IMR-90 (cell line): ENCODE measurements at regions of chr7 and their contacts with region 1.

Region 1: DNA sequence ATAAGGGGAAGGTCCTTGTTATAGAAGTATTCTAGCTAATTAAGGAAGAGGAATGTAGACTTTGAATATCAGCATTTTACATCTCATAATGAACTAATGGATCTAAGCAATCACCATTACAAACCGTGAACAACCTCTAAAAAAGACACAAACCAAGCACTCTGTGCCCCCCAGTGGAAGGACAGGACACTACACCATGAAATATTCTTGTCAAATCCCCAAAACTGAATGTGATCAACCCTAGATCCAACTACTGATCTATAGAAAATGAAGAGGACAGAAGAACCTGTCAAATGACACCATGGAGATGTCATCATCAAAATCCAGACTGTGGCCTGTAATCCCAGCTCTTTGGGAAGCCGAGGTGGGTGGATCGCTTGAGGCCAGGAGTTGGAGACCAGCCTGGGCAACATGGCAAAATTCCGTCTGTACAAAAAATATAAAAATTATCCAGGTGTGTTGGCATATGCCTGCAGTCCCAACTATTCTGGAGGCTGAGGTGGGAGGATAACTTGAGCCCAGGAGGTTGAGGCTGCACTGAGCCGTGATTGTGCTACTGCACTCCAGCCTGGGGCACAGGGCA is 111.3 kb upstream of the CARD11 start:
- DNase-seq: peak; percentile 48
- ATAC-seq: peak; percentile 88
- H3K4me3 ChIP-seq: no peak overlapping the region
- H3K27ac ChIP-seq: no peak overlapping the region
- H3K4me1 ChIP-seq: no peaks in the 10 kb centered on the region
- H3K27me3 ChIP-seq: peaks cover 3% of the 10 kb centered on the region; the same call in 1 of the 2 replicates
- CTCF ChIP-seq: peak; percentile 62
- POLR2A ChIP-seq: no peak
- RAD21 ChIP-seq: peak; percentile 74

Region 2: GRCh38 chr7:2477447-2478398 is 677.3 kb before region 1 on chr7:
- CTCF ChIA-PET with region 1: no interaction called
- POLR2A ChIA-PET with region 1: no interaction called
- dilution Hi-C with region 1: no loop called
- in situ Hi-C with region 1: no loop called
- intact Hi-C with region 1: loop called (anchors 10 kb)
- DNase-seq: peak; percentile 49
- ATAC-seq: peak; percentile 99
- H3K4me3 ChIP-seq: no peak overlapping the region
- H3K27ac ChIP-seq: no peak overlapping the region
- H3K4me1 ChIP-seq: no peaks in the 10 kb centered on the region
- H3K27me3 ChIP-seq: peaks cover 13% of the 10 kb centered on the region; the same call in 1 of the 2 replicates
- CTCF ChIP-seq: peak; percentile 85
- POLR2A ChIP-seq: no peak
- RAD21 ChIP-seq: peak; percentile 89

Region 3: GRCh38 chr7:2567679-2568278 is 587.2 kb before region 1 on chr7:
- CTCF ChIA-PET with region 1: no interaction called
- POLR2A ChIA-PET with region 1: no interaction called
- dilution Hi-C with region 1: no loop called
- in situ Hi-C with region 1: no loop called
- intact Hi-C with region 1: loop called (anchors 5 kb)
- DNase-seq: peak; percentile 38
- ATAC-seq: peak; percentile 63
- H3K4me3 ChIP-seq: no peak overlapping the region
- H3K27ac ChIP-seq: no peak overlapping the region
- H3K4me1 ChIP-seq: peaks cover 9% of the 10 kb centered on the region
- H3K27me3 ChIP-seq: no peaks in the 10 kb centered on the region
- CTCF ChIP-seq: peak; percentile 56
- POLR2A ChIP-seq: no peak
- RAD21 ChIP-seq: peak; percentile 74

Region 4: DNA sequence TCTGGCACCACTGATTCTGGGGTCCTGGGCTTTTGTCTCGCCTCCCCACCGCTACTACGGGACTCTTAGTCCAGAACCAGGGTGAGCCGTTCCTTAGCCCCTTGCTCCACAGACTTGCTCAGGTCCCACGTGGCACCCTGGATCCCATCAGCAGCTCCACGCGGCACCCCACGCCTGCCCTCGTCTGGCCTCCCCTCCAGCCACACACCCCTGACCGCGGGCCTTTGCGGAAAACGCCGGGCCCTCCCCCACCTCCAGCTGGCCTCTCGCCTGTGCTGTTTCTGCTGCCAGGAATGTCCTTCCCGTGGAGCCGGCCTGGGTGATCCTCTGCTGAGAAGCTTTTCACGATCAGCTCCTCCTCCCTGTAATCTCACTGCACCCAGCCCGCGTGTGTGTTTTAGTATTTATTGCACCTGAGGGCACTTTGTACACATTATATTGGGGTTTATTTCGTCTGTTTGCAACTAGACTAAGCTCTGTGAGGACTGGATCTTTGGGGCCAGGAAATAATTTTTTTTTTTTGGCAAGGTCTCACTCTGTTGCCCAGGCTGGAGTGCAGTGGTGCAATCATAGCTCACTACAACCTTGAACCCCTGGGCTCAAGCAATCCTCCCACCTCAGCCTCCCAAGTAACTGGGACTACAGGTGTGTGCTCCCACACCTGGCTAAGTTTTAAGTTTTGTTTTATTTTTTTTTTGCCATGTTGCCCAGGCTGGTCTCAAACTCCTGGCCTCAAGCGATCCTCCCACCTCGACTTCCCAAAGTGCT is 533.8 kb before region 1 on chr7:
- CTCF ChIA-PET with region 1: no interaction called
- POLR2A ChIA-PET with region 1: no interaction called
- dilution Hi-C with region 1: no loop called
- in situ Hi-C with region 1: no loop called
- intact Hi-C with region 1: no loop called
- DNase-seq: peak; percentile 68
- ATAC-seq: peak; percentile 69
- H3K4me3 ChIP-seq: no peak overlapping the region
- H3K27ac ChIP-seq: peak overlapping the region; percentile 15
- H3K4me1 ChIP-seq: peaks cover 22% of the 10 kb centered on the region
- H3K27me3 ChIP-seq: no peaks in the 10 kb centered on the region
- CTCF ChIP-seq: no peak
- POLR2A ChIP-seq: no peak
- RAD21 ChIP-seq: no peak

Region 5: DNA sequence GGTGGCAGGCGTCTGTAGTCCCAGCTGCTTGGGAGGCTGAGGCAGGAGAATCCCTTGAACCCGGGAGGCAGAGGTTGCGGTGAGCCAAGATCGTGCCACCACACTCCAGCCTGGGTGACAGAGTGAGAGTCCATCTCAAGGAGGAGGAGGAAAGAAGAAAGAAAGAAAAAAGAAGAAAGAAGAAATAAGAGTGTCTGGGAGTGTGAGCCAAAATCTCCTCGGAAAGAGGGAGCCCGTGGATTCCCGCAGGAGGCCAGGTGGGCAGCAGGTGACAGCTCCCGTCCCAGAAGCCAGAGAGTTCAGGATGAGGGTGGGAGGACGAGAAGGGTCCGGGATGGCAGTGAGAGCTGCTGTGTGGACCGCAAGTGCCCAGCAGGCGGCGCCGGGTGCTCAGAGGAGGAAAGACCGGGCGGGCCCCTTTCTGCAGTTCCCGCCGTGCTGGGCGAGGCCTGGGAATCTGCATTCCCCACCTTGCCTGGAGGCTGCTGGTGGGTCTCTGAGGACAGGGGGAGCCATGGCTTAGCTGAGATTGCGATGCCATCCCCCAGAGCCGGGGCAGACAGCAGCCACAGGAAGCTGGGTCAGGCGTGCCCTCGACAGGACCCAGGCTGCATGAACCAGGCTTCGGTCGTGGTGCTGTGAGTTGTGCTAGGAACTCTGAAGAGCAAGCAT is 484.1 kb before region 1 on chr7:
- CTCF ChIA-PET with region 1: no interaction called
- POLR2A ChIA-PET with region 1: no interaction called
- dilution Hi-C with region 1: no loop called
- in situ Hi-C with region 1: loop called (anchors 25 kb)
- intact Hi-C with region 1: loop called (anchors 2 kb)
- DNase-seq: peak; percentile 51
- ATAC-seq: peak; percentile 84
- H3K4me3 ChIP-seq: no peak overlapping the region
- H3K27ac ChIP-seq: no peak overlapping the region
- H3K4me1 ChIP-seq: peaks cover 6% of the 10 kb centered on the region
- H3K27me3 ChIP-seq: no peaks in the 10 kb centered on the region
- CTCF ChIP-seq: peak; percentile 82
- POLR2A ChIP-seq: no peak; the same call in 1 of the 2 replicates
- RAD21 ChIP-seq: peak; percentile 84

Region 6: DNA sequence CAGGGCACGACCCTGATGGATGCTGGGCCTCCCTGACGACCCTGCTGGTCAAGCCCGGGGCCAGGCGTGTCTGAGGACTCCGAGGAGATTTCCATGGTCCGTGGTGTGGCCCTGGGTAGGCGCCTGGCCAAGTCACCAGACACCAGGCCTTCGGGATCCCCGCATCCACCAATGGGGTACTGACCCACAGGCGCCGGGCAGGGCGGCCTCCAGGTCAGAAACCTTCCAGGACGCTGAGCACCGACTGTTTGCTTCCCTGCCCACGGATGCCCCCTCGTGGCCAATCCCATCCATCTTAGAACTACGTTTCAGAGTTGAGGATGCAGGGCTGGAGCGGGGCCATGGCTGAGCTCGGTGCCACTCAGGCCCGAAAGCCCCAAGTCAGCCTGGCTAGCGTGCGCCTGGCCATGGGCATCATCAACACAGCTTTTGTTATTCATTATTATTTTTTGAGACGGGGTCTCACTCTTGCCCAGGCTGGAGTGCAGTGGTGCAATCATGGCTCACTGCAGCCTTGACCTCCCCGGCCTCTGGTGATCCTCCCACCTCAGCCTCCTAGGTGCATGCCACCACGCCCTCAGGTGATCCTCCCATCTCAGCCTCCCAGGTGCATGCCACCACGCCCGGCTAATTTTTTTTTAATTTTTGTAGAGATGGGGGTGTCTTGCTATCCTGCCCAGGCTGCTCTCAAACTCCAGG is 474.1 kb before region 1 on chr7:
- CTCF ChIA-PET with region 1: no interaction called
- POLR2A ChIA-PET with region 1: no interaction called
- dilution Hi-C with region 1: no loop called
- in situ Hi-C with region 1: loop called (anchors 25 kb)
- intact Hi-C with region 1: no loop called
- DNase-seq: peak; percentile 41
- ATAC-seq: peak; percentile 86
- H3K4me3 ChIP-seq: no peak overlapping the region
- H3K27ac ChIP-seq: no peak overlapping the region
- H3K4me1 ChIP-seq: no peaks in the 10 kb centered on the region
- H3K27me3 ChIP-seq: peaks cover 3% of the 10 kb centered on the region; the same call in 1 of the 2 replicates
- CTCF ChIP-seq: peak; percentile 70
- POLR2A ChIP-seq: no peak
- RAD21 ChIP-seq: peak; percentile 70

Region 7: DNA sequence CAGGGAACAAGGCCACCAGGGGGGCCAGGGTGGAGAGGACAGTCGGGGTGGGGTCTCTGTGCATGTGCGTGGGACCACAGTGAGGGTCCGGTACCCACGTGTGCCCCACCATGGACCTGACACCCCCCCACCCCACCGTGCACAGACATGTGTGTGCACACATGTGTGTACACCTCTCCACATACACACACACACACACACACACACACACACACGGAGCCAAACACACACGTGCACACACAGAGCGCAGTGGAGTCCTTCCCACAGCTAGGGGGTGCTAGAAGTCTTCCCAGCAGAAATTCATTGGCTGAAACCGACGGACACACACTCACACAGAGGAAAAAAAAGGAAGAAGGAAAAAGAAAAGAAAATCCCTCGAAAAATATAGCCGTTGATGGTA is 268.1 kb before region 1 on chr7:
- CTCF ChIA-PET with region 1: no interaction called
- POLR2A ChIA-PET with region 1: no interaction called
- dilution Hi-C with region 1: no loop called
- in situ Hi-C with region 1: loop called (anchors 10 kb)
- intact Hi-C with region 1: loop called (anchors 1 kb)
- DNase-seq: peak; percentile 82
- ATAC-seq: peak; percentile 98
- H3K4me3 ChIP-seq: no peak overlapping the region
- H3K27ac ChIP-seq: no peak overlapping the region
- H3K4me1 ChIP-seq: no peaks in the 10 kb centered on the region
- H3K27me3 ChIP-seq: peaks cover 2% of the 10 kb centered on the region; the same call in 1 of the 2 replicates
- CTCF ChIP-seq: peak; percentile 76
- POLR2A ChIP-seq: no peak
- RAD21 ChIP-seq: peak; percentile 81

Region 8: DNA sequence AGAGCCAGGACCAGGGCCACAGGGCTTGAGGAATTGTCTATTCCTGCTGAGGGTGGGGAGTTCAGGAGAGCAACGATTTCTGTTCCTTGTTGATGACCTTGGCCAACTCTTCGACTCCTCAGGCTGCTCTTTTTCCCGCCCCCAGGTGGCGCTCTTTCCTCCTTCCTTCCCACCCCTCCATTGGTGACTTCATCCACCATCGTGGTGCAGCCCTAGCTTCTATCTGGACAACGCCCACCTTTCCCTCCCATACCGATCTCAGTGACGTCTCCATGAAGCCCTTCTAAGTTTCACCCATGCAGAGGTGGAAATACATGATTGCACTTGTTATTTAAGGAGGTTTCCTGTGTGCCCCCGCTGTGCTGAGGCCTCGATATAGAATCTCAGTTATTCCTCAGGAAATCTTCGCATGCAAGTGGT is 89.3 kb before region 1 on chr7:
- CTCF ChIA-PET with region 1: no interaction called
- POLR2A ChIA-PET with region 1: no interaction called
- dilution Hi-C with region 1: no loop called
- in situ Hi-C with region 1: no loop called
- intact Hi-C with region 1: loop called (anchors 5 kb)
- DNase-seq: peak; percentile 4
- ATAC-seq: no peak
- H3K4me3 ChIP-seq: no peak overlapping the region
- H3K27ac ChIP-seq: no peak overlapping the region
- H3K4me1 ChIP-seq: no peaks in the 10 kb centered on the region
- H3K27me3 ChIP-seq: peaks cover 2% of the 10 kb centered on the region; the same call in 1 of the 2 replicates
- CTCF ChIP-seq: no peak
- POLR2A ChIP-seq: no peak
- RAD21 ChIP-seq: no peak